ENCODE measurements at regions of chr5 and their contacts with region 1.

Region 1: GRCh38 chr5:10283927-10284635 is 23.6 kb downstream of the CMBL start:
- DNase-seq: peak; percentile 78
- H3K4me3 ChIP-seq: no peak overlapping the region
- H3K27ac ChIP-seq: no peak overlapping the region
- H3K4me1 ChIP-seq: no peaks in the 10 kb centered on the region
- H3K27me3 ChIP-seq: no peaks in the 10 kb centered on the region
- CTCF ChIP-seq: peak; percentile 92 to 98
- POLR2A ChIP-seq: no peak

Region 2: DNA sequence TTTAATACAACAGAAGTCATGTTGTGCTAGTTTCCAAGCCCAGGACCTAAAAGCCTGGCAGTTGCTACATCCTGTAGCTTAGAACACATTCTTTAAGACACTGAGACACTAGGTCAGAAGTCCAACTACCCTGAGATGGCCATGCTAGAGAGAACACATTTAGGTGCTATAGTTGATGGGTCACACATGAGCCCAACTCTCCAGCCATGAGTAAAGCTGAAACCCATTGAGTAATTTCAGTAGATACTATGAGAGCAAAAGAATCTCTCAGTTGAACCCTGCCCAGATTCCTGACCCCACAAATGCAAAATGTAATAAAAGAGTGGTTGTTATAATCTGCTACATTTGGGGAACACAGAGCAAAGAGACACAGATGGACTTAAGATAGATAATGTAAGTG is 902.6 kb before region 1 on chr5:
- CTCF ChIA-PET with region 1: no interaction called
- POLR2A ChIA-PET with region 1: no interaction called
- dilution Hi-C with region 1: no loop called
- intact Hi-C with region 1: no loop called
- DNase-seq: no peak
- H3K4me3 ChIP-seq: no peak overlapping the region
- H3K27ac ChIP-seq: no peak overlapping the region
- H3K4me1 ChIP-seq: no peaks in the 10 kb centered on the region
- H3K27me3 ChIP-seq: no peaks in the 10 kb centered on the region
- CTCF ChIP-seq: no peak
- POLR2A ChIP-seq: no peak

Region 3: DNA sequence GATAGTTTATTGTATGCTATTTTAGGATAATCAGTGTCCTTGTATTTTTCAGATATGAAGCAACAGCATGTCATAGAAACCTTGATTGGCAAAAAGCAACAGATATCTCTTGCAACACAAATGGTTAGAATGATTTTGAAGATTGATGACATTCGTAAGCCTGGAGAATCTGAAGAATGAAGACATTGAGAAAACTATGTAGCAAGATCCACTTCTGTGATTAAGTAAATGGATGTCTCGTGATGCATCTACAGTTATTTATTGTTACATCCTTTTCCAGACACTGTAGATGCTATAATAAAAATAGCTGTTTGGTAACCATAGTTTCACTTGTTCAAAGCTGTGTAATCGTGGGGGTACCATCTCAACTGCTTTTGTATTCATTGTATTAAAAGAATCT is 19.5 kb before region 1 on chr5:
- CTCF ChIA-PET with region 1: interaction called, 17 read pairs
- POLR2A ChIA-PET with region 1: no interaction called
- dilution Hi-C with region 1: no loop called
- intact Hi-C with region 1: no loop called
- DNase-seq: no peak
- H3K4me3 ChIP-seq: no peak overlapping the region
- H3K27ac ChIP-seq: no peak overlapping the region
- H3K4me1 ChIP-seq: no peaks in the 10 kb centered on the region
- H3K27me3 ChIP-seq: no peaks in the 10 kb centered on the region
- CTCF ChIP-seq: no peak
- POLR2A ChIP-seq: no peak

Region 4: GRCh38 chr5:10307206-10308148 is 23.4 kb after region 1 on chr5 and contains the start of gene CMBL:
- CTCF ChIA-PET with region 1: interaction called, 15 read pairs
- POLR2A ChIA-PET with region 1: no interaction called
- dilution Hi-C with region 1: no loop called
- intact Hi-C with region 1: loop called (anchors 2 kb)
- DNase-seq: peak; percentile 65
- H3K4me3 ChIP-seq: peak within 1 kb of the TSS; percentile 72 to 83 (median 74)
- H3K27ac ChIP-seq: no peak within 1 kb of the TSS
- H3K4me1 ChIP-seq: peaks cover 2% of the 10 kb centered on the region
- H3K27me3 ChIP-seq: no peaks in the 10 kb centered on the region
- CTCF ChIP-seq: no peak
- POLR2A ChIP-seq: peak; percentile 35
- total RNA-seq, gene CMBL: 14.3 and 15.9 TPM in 2 replicates

Region 5: GRCh38 chr5:10353241-10354047 is 69.4 kb after region 1 on chr5 and contains the start of gene MARCHF6:
- CTCF ChIA-PET with region 1: interaction called, 28 read pairs
- POLR2A ChIA-PET with region 1: interaction called, 4 read pairs
- dilution Hi-C with region 1: no loop called
- intact Hi-C with region 1: loop called (anchors 1 kb)
- DNase-seq: peak; percentile 89
- H3K4me3 ChIP-seq: peak within 1 kb of the TSS; percentile 47 to 94 (median 72)
- H3K27ac ChIP-seq: peak within 1 kb of the TSS; percentile 85
- H3K4me1 ChIP-seq: peaks cover 17% of the 10 kb centered on the region
- H3K27me3 ChIP-seq: no peaks in the 10 kb centered on the region
- CTCF ChIP-seq: no peak
- POLR2A ChIP-seq: peak; percentile 97
- total RNA-seq, gene MARCHF6: 105 and 108 TPM in 2 replicates

Region 6: GRCh38 chr5:10396552-10396951 is 112.5 kb after region 1 on chr5:
- CTCF ChIA-PET with region 1: interaction called, 11 read pairs
- POLR2A ChIA-PET with region 1: no interaction called
- dilution Hi-C with region 1: no loop called
- intact Hi-C with region 1: no loop called
- DNase-seq: no peak
- H3K4me3 ChIP-seq: no peak overlapping the region
- H3K27ac ChIP-seq: no peak overlapping the region
- H3K4me1 ChIP-seq: no peaks in the 10 kb centered on the region
- H3K27me3 ChIP-seq: no peaks in the 10 kb centered on the region
- CTCF ChIP-seq: no peak
- POLR2A ChIP-seq: no peak

Region 7: GRCh38 chr5:10441083-10441991 is 157.3 kb after region 1 on chr5 and contains the start of gene ROPN1L:
- CTCF ChIA-PET with region 1: interaction called, 24 read pairs
- POLR2A ChIA-PET with region 1: no interaction called
- dilution Hi-C with region 1: no loop called
- intact Hi-C with region 1: loop called (anchors 1 kb)
- DNase-seq: peak; percentile 90
- H3K4me3 ChIP-seq: peak within 1 kb of the TSS; percentile 56 to 73 (median 57)
- H3K27ac ChIP-seq: peak within 1 kb of the TSS; percentile 21
- H3K4me1 ChIP-seq: peaks cover 23% of the 10 kb centered on the region
- H3K27me3 ChIP-seq: no peaks in the 10 kb centered on the region
- CTCF ChIP-seq: no peak
- POLR2A ChIP-seq: peak; percentile 77
- total RNA-seq, gene ROPN1L: 0.55 and 0.60 TPM in 2 replicates

Measured in endothelial cell of umbilical vein (primary cell).